ENCODE measurements at regions of chr1 and their contacts with region 1.

Region 1: GRCh38 chr1:27934818-27935549 is at the start of gene SMPDL3B:
- DNase-seq: peak; percentile 90
- ATAC-seq: peak; percentile 100
- H3K4me3 ChIP-seq: peak within 1 kb of the TSS; percentile 79
- H3K27ac ChIP-seq: no peak within 1 kb of the TSS
- H3K4me1 ChIP-seq: peaks cover 8% of the 10 kb centered on the region; the same call in 1 of the 2 replicates
- H3K27me3 ChIP-seq: no peaks in the 10 kb centered on the region
- CTCF ChIP-seq: peak; percentile 31
- total RNA-seq, gene SMPDL3B: 19.6 and 25.7 TPM in 2 replicates

Region 2: GRCh38 chr1:27959400-27960217 is 24.6 kb after region 1 on chr1 and contains the start of gene XKR8:
- CTCF ChIA-PET with region 1: no interaction called
- POLR2A ChIA-PET with region 1: no interaction called
- intact Hi-C with region 1: loop called (anchors 1 kb)
- DNase-seq: peak; percentile 79
- ATAC-seq: peak; percentile 92
- H3K4me3 ChIP-seq: peak within 1 kb of the TSS; percentile 74
- H3K27ac ChIP-seq: peak within 1 kb of the TSS; percentile 81
- H3K4me1 ChIP-seq: peaks cover 26% of the 10 kb centered on the region
- H3K27me3 ChIP-seq: no peaks in the 10 kb centered on the region
- CTCF ChIP-seq: peak; percentile 68
- total RNA-seq, gene XKR8: 6.9 and 8.2 TPM in 2 replicates

Region 3: GRCh38 chr1:27979151-27979858 is 44.3 kb after region 1 on chr1:
- CTCF ChIA-PET with region 1: interaction called, 6 read pairs
- POLR2A ChIA-PET with region 1: no interaction called
- intact Hi-C with region 1: loop called (anchors 2 kb)
- DNase-seq: peak; percentile 75
- ATAC-seq: peak; percentile 87
- H3K4me3 ChIP-seq: no peak overlapping the region
- H3K27ac ChIP-seq: no peak overlapping the region
- H3K4me1 ChIP-seq: no peaks in the 10 kb centered on the region
- H3K27me3 ChIP-seq: no peaks in the 10 kb centered on the region
- CTCF ChIP-seq: peak; percentile 75

Region 4: GRCh38 chr1:28056129-28056925 is 121.3 kb after region 1 on chr1:
- CTCF ChIA-PET with region 1: no interaction called
- POLR2A ChIA-PET with region 1: no interaction called
- intact Hi-C with region 1: no loop called
- DNase-seq: no peak
- ATAC-seq: no peak
- H3K4me3 ChIP-seq: no peak overlapping the region
- H3K27ac ChIP-seq: no peak overlapping the region
- H3K4me1 ChIP-seq: no peaks in the 10 kb centered on the region; the same call in 1 of the 2 replicates
- H3K27me3 ChIP-seq: no peaks in the 10 kb centered on the region
- CTCF ChIP-seq: no peak

Measured in PC-3 (cell line).